Mammary epithelial cell (primary cell): ENCODE measurements at regions of chr9 and their contacts with region 1.

Region 1: DNA sequence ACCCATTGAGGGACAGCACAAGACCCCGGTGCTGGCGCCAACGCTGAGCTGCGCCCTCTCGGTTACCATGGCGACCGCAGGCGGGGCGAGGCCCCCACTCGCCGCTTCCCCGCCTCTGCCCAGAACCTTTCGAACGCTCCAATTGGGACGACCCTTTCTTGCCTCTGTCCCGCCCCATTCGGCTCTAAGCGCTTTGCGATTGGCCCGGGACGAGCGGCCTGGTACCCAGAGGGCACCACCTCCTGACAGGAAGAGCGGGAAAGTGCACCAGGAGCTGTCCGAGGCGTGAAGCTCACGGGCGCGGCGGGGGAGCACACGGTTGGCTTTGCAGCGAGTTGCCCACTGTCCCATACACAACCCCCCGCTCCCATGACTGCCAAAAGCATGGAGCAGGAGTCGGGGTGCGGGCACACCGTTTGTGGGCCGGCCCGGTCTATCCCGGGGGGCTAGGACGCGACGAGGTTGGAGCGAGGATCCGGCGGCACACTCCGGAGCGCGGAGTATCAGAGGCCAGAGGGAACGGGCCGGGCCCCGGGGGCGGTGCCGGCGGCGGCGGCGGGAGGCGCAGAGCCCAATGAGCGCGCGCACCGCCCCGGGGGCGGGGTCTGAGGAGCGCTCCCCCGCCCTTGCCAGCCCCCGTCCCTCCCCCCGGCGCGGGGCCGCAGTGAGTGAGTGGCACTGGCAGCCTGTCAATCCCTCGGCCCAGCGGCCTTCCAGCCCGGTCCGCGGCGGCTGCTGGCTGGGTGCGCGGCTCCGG is 978 bp upstream of the PBX3 start:
- DNase-seq: peak; percentile 96
- H3K4me3 ChIP-seq: peak overlapping the region; percentile 60 to 98 (median 96)
- H3K27ac ChIP-seq: peak overlapping the region; percentile 46
- H3K4me1 ChIP-seq: peaks cover 26% of the 10 kb centered on the region
- H3K27me3 ChIP-seq: no peaks in the 10 kb centered on the region
- CTCF ChIP-seq: no peak

Region 2: DNA sequence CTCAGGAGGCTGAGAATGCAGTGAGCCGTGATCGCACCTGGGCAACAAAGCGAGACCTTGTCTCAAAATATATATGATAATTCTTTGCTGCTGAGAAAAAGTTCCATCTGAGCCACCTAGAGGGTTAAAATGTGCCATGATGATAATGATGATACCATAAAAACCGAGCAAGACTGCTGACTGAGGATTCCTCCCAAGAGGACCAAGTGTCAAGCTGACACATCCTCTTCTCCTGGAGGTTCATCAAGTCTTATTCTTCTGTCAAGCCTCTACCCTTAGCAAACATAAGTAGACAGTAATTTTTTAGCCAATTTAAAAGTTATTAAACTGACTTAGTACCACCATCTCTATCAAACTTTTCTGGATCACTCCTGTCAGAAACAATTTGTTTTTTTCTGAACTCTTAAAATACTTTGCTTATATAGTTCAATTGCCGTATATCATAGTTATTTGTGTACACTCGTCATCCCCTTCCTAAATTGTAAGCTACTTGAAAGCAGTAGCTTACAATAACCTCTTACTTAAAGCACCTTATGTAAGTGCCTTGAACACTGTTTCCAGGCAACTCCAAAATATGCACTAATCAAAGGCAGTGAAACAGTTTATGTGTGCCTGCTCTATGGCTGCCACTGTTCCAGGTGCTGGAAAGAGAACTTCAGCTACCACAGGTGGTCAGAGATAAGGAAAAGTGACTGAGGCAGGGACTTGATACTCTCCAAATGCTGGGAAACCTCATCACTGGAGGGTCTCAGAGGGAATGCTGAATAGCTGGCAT is 660.3 kb before region 1 on chr9:
- CTCF ChIA-PET with region 1: no interaction called
- dilution Hi-C with region 1: no loop called
- in situ Hi-C with region 1: no loop called
- intact Hi-C with region 1: no loop called
- DNase-seq: no peak
- H3K4me3 ChIP-seq: no peak overlapping the region
- H3K27ac ChIP-seq: no peak overlapping the region
- H3K4me1 ChIP-seq: no peaks in the 10 kb centered on the region
- H3K27me3 ChIP-seq: no peaks in the 10 kb centered on the region
- CTCF ChIP-seq: no peak

Region 3: DNA sequence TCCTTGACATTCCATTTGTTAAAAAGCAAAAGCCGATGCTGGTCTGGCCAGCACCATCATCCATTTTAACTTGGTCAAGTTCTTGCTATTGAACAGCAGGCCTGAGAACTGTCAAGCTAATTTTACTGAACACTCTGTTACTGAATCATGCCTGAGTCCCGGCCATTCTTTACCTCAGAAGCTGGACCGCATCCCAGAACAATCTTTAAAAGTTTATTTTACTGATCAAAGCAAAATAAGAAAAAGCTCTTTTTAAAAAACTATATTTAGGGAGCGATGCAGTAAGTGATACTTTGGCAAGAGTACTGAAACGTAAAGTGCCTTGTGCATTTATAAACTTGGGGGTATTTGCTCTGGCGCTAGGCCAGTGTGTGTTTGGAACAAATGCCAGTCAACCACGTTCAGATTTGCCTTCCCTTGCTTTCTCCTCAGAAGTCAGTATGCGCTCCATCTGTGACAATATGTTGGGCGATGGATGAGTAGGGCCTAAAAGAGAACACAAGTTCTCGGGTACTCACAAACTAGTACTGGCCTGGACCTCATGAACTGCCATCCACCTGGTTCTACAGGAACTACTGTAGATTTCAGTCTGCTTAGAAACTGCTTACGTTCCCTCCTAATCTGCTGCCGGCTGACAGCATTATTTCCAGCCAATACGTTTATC is 201.1 kb before region 1 on chr9:
- CTCF ChIA-PET with region 1: no interaction called
- dilution Hi-C with region 1: loop called (anchors 5 kb)
- in situ Hi-C with region 1: loop called in 1 of 2 experiments (anchors 25 kb)
- intact Hi-C with region 1: no loop called
- DNase-seq: no peak
- H3K4me3 ChIP-seq: no peak overlapping the region
- H3K27ac ChIP-seq: no peak overlapping the region
- H3K4me1 ChIP-seq: peaks cover 10% of the 10 kb centered on the region
- H3K27me3 ChIP-seq: no peaks in the 10 kb centered on the region
- CTCF ChIP-seq: no peak

Region 4: GRCh38 chr9:125631391-125632085 is 114.7 kb before region 1 on chr9:
- CTCF ChIA-PET with region 1: no interaction called
- dilution Hi-C with region 1: no loop called
- in situ Hi-C with region 1: no loop called
- intact Hi-C with region 1: loop called (anchors 2 kb)
- DNase-seq: peak; percentile 42
- H3K4me3 ChIP-seq: no peak overlapping the region
- H3K27ac ChIP-seq: peak overlapping the region; percentile 14
- H3K4me1 ChIP-seq: peaks cover 47% of the 10 kb centered on the region
- H3K27me3 ChIP-seq: no peaks in the 10 kb centered on the region
- CTCF ChIP-seq: peak; percentile 44 to 53

Region 5: GRCh38 chr9:125706661-125707471 is 39.3 kb before region 1 on chr9 and contains the start of gene MAPKAP1:
- CTCF ChIA-PET with region 1: no interaction called
- dilution Hi-C with region 1: no loop called
- in situ Hi-C with region 1: no loop called
- intact Hi-C with region 1: loop called (anchors 1 kb)
- DNase-seq: peak; percentile 97
- H3K4me3 ChIP-seq: peak within 1 kb of the TSS; percentile 78 to 88 (median 84)
- H3K27ac ChIP-seq: peak within 1 kb of the TSS; percentile 67
- H3K4me1 ChIP-seq: peaks cover 19% of the 10 kb centered on the region
- H3K27me3 ChIP-seq: no peaks in the 10 kb centered on the region
- CTCF ChIP-seq: no peak
- total RNA-seq, gene MAPKAP1: 81.4 to 104 TPM

Region 6: GRCh38 chr9:125844611-125845010 is 98.4 kb after region 1 on chr9:
- CTCF ChIA-PET with region 1: no interaction called
- dilution Hi-C with region 1: no loop called
- in situ Hi-C with region 1: no loop called
- intact Hi-C with region 1: loop called (anchors 1 kb)
- DNase-seq: peak; percentile 49
- H3K4me3 ChIP-seq: peak overlapping the region; percentile 4 to 50 (median 13)
- H3K27ac ChIP-seq: peak overlapping the region; percentile 54
- H3K4me1 ChIP-seq: peaks cover 14% of the 10 kb centered on the region
- H3K27me3 ChIP-seq: no peaks in the 10 kb centered on the region
- CTCF ChIP-seq: no peak

Region 7: GRCh38 chr9:125929846-125930245 is 183.7 kb after region 1 on chr9:
- CTCF ChIA-PET with region 1: no interaction called
- dilution Hi-C with region 1: no loop called
- in situ Hi-C with region 1: no loop called
- intact Hi-C with region 1: no loop called
- DNase-seq: peak; percentile 66
- H3K4me3 ChIP-seq: no peak overlapping the region
- H3K27ac ChIP-seq: no peak overlapping the region
- H3K4me1 ChIP-seq: peaks cover 37% of the 10 kb centered on the region
- H3K27me3 ChIP-seq: no peaks in the 10 kb centered on the region
- CTCF ChIP-seq: no peak

Region 8: GRCh38 chr9:125961072-125961471 is 214.9 kb after region 1 on chr9:
- CTCF ChIA-PET with region 1: no interaction called
- dilution Hi-C with region 1: no loop called
- in situ Hi-C with region 1: no loop called
- intact Hi-C with region 1: loop called (anchors 10 kb)
- DNase-seq: no peak
- H3K4me3 ChIP-seq: no peak overlapping the region
- H3K27ac ChIP-seq: no peak overlapping the region
- H3K4me1 ChIP-seq: no peaks in the 10 kb centered on the region
- H3K27me3 ChIP-seq: no peaks in the 10 kb centered on the region
- CTCF ChIP-seq: no peak